ENCODE measurements at regions of chr6 and their contacts with region 1.

Region 1: GRCh38 chr6:166999145-166999883 is at the start of gene CEP43:
- DNase-seq: peak; percentile 91
- ATAC-seq: peak; percentile 96
- H3K4me3 Mint-ChIP-seq: peak within 1 kb of the TSS; percentile 85
- H3K27ac Mint-ChIP-seq: peak within 1 kb of the TSS; percentile 78
- H3K4me1 Mint-ChIP-seq: peaks cover 26% of the 10 kb centered on the region
- H3K27me3 Mint-ChIP-seq: no peaks in the 10 kb centered on the region
- total RNA-seq, gene CEP43: 19.9 to 20.0 TPM

Region 2: GRCh38 chr6:166786704-166787293 is 212.5 kb before region 1 on chr6:
- CTCF ChIA-PET with region 1: interaction called, 4 read pairs
- POLR2A ChIA-PET with region 1: no interaction called
- intact Hi-C with region 1: loop called in 1 of 2 experiments (anchors 2 kb)
- DNase-seq: no peak
- ATAC-seq: no peak
- H3K4me3 Mint-ChIP-seq: no peak overlapping the region
- H3K27ac Mint-ChIP-seq: no peak overlapping the region
- H3K4me1 Mint-ChIP-seq: no peaks in the 10 kb centered on the region
- H3K27me3 Mint-ChIP-seq: no peaks in the 10 kb centered on the region

Region 3: GRCh38 chr6:166956444-166957086 is 42.7 kb before region 1 on chr6 and contains the start of gene RNASET2:
- CTCF ChIA-PET with region 1: interaction called, 5 read pairs
- POLR2A ChIA-PET with region 1: interaction called, 3 read pairs
- intact Hi-C with region 1: loop called (anchors 1 kb)
- DNase-seq: peak; percentile 100
- ATAC-seq: peak; percentile 80
- H3K4me3 Mint-ChIP-seq: peak within 1 kb of the TSS; percentile 94
- H3K27ac Mint-ChIP-seq: peak within 1 kb of the TSS; percentile 97
- H3K4me1 Mint-ChIP-seq: peaks cover 69% of the 10 kb centered on the region
- H3K27me3 Mint-ChIP-seq: no peaks in the 10 kb centered on the region
- total RNA-seq, gene RNASET2: 68.7 to 85.2 TPM

Region 4: DNA sequence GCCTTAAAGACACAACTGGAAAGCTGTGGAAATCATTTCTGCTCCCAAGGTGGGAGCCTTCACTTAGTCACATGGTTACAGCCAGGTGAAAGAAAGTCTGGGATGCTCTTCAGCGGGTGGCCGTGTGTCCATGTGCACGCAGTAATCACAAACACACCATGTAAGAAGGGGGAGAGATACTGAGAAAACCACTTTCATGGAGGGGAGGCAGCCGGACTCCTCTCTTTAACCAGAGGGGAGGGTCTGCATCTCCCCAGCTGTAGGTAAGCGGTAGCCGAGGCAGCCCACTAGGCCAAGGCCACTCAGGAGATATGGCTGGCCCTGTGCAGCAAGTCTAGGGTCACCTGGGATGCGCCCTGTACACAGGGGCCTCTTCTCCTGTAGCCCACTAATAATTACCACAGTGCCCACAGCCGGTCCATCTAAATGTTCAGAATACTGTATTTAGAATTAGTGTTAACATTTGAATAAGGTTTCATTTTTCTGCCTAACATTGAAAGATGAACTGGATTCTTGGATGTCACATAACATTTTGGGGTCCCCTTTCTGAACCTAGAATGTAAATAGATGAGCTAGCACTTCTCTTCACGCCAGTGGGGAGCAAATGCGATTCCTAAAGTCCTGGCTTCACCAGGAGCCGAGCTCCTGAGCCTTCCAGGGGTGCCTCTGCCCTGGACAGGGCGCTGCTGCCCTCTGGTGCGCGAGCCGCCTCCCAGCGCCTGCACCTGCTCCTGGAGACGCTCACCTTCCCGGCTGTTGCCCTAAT is 142.5 kb after region 1 on chr6:
- CTCF ChIA-PET with region 1: interaction called, 3 read pairs
- POLR2A ChIA-PET with region 1: no interaction called
- intact Hi-C with region 1: loop called (anchors 1 kb)
- DNase-seq: peak; percentile 75
- ATAC-seq: peak; percentile 85
- H3K4me3 Mint-ChIP-seq: no peak overlapping the region
- H3K27ac Mint-ChIP-seq: no peak overlapping the region
- H3K4me1 Mint-ChIP-seq: peaks cover 22% of the 10 kb centered on the region
- H3K27me3 Mint-ChIP-seq: peaks cover 3% of the 10 kb centered on the region

Region 5: GRCh38 chr6:167826230-167826895 is 827.0 kb after region 1 on chr6:
- CTCF ChIA-PET with region 1: no interaction called
- POLR2A ChIA-PET with region 1: no interaction called
- intact Hi-C with region 1: loop called in 1 of 2 experiments (anchors 2 kb)
- DNase-seq: peak; percentile 80
- ATAC-seq: peak; percentile 92
- H3K4me3 Mint-ChIP-seq: peak overlapping the region; percentile 76
- H3K27ac Mint-ChIP-seq: peak overlapping the region; percentile 8
- H3K4me1 Mint-ChIP-seq: peaks cover 23% of the 10 kb centered on the region
- H3K27me3 Mint-ChIP-seq: peaks cover 58% of the 10 kb centered on the region